Motor neuron (in vitro differentiated cells): ENCODE measurements at regions of chr1 and their contacts with region 1.

Region 1: DNA sequence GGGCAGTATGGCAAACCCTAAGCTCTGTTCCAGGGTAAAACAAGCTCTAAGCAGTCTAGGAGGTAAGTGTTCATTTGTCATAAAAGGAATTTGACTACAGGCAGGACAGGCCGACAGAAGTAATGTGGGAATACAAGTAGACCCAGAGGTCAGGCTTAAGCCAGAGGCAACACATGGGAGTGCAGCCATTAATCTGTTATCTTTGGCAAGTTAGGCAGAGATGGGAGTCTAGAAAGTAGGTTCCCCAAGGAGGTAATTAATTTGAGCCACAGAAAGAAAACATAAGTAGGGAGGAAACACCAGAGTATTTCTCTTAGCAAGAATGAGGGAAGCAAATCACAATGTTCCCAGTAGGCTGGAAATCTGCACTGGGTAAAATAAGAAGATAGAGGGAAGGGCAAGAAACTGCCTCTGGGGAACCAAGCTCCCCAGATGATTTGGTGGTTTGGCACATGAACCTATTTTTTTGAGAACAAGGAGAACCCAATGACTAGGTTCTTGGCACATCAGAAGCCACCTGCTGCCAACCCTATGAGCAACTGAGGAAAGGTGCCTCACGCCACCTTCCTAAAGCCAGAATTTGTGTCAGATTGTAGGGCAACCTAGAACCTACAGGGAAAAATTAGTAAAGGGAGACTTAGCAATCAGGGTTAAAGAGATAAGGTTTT is 636.4 kb upstream of the PLXNA2 start:
- ATAC-seq: peak in 2 of 8 experiments; percentile 33 to 47
- H3K4me3 ChIP-seq: no peak overlapping the region
- H3K27ac ChIP-seq: no peak overlapping the region
- H3K4me1 ChIP-seq: peaks cover 8 to 23% of the 10 kb centered on the region in 2 donors

Region 2: GRCh38 chr1:208562151-208562960 is 318.2 kb before region 1 on chr1:
- in situ Hi-C with region 1: no loop called
- ATAC-seq: peak in 1 of 8 experiments; percentile 39
- H3K4me3 ChIP-seq: no peak overlapping the region
- H3K27ac ChIP-seq: no peak overlapping the region
- H3K4me1 ChIP-seq: peaks cover 6 to 18% of the 10 kb centered on the region in 2 donors

Region 3: GRCh38 chr1:208724079-208724478 is 156.5 kb before region 1 on chr1:
- in situ Hi-C with region 1: no loop called
- ATAC-seq: no peak
- H3K4me3 ChIP-seq: no peak overlapping the region
- H3K27ac ChIP-seq: no peak overlapping the region
- H3K4me1 ChIP-seq: no peaks in the 10 kb centered on the region

Region 4: GRCh38 chr1:208942394-208943130 is 62.0 kb after region 1 on chr1:
- in situ Hi-C with region 1: loop called in 1 of 9 experiments (anchors 10 kb)
- ATAC-seq: peak in 2 of 8 experiments; percentile 37 to 53
- H3K4me3 ChIP-seq: no peak overlapping the region
- H3K27ac ChIP-seq: no peak overlapping the region
- H3K4me1 ChIP-seq: peaks cover 4 to 7% of the 10 kb centered on the region in 2 donors

Region 5: GRCh38 chr1:208967334-208967733 is 86.8 kb after region 1 on chr1:
- in situ Hi-C with region 1: no loop called
- ATAC-seq: no peak
- H3K4me3 ChIP-seq: no peak overlapping the region
- H3K27ac ChIP-seq: no peak overlapping the region
- H3K4me1 ChIP-seq: no peaks in the 10 kb centered on the region

Region 6: DNA sequence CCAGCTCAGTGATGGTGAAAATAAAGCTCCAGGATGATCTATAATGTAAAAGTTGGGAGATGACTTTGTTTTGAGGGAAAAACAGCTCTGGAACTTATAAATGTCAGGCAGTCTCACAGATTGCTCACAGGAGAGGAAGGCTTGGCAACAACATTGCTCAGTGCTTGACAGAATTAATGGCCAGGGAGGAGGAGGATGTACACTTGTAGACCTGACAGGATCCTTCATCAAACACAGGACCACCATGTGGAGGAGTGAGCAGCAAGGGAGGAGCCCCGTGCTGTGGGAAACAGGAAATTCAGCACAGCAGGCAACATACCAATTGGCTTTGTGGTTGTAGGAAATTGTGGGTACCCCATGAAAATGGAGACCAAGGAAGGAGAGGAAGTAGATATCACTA is 411.1 kb after region 1 on chr1:
- in situ Hi-C with region 1: no loop called
- ATAC-seq: no peak
- H3K4me3 ChIP-seq: no peak overlapping the region
- H3K27ac ChIP-seq: no peak overlapping the region
- H3K4me1 ChIP-seq: peaks cover 9 to 29% of the 10 kb centered on the region in 2 donors